Activated CD8-positive, alpha-beta T cell treated with anti-CD3 and anti-CD28 coated beads for 36 hours (primary cell): ENCODE measurements at regions of chr22 and their contacts with region 1.

Region 1: DNA sequence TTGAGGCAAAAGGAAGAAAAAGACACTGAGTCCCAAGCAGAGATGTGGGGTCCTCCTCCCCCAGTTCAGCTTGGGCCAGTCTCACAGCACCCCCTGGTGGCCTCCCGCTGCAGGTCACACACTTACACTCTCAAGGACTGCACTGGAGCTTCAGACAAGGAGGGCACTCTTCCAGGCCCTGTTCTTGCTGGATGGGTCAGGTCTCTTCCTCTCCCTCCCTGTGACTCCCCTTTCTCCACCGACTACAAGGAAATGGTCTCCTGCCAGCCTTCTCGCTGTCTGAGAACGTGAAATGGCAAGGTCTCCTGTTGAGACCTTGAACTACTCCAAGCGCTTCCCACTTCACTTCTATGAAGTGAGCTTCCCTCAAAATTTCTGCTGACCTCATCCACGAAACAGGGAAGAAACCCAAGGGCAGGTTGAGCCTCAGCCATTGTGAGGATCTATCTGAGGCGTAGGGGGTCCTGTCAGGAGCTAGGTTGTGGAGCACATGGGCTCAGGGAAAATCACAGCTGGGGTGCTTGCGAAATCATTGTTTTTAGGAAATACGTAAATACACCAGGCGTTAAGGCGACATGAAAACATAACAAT is 11.2 kb upstream of the IGLL1 start:
- DNase-seq: peak; percentile 82
- ATAC-seq: peak; percentile 84
- H3K4me3 Mint-ChIP-seq: no peak overlapping the region
- H3K27ac Mint-ChIP-seq: no peak overlapping the region
- H3K4me1 Mint-ChIP-seq: no peaks in the 10 kb centered on the region
- H3K27me3 Mint-ChIP-seq: no peaks in the 10 kb centered on the region
- CTCF ChIP-seq: peak; percentile 90

Region 2: DNA sequence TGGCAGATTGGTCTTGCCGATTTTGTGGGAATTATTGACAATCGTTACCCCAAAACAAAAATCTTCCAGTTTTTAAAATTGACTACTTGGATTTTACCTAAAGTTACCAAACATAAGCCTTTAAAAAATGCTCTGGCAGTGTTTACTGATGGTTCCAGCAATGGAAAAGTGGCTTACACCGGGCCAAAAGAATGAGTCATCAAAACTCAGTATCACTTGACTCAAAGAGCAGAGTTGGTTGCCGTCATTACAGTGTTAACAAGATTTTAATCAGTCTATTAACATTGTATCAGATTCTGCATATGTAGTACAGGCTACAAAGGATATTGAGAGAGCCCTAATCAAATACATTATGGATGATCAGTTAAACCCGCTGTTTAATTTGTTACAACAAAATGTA is 48.4 kb before region 1 on chr22:
- CTCF ChIA-PET with region 1: interaction called, 6 read pairs
- POLR2A ChIA-PET with region 1: no interaction called
- intact Hi-C with region 1: loop called (anchors 5 kb)
- DNase-seq: no peak
- ATAC-seq: no peak
- H3K4me3 Mint-ChIP-seq: no peak overlapping the region
- H3K27ac Mint-ChIP-seq: no peak overlapping the region
- H3K4me1 Mint-ChIP-seq: peaks cover 9% of the 10 kb centered on the region
- H3K27me3 Mint-ChIP-seq: peaks cover 2% of the 10 kb centered on the region
- CTCF ChIP-seq: no peak

Region 3: GRCh38 chr22:23580576-23581259 is 10.6 kb before region 1 on chr22:
- CTCF ChIA-PET with region 1: interaction called, 17 read pairs
- POLR2A ChIA-PET with region 1: no interaction called
- intact Hi-C with region 1: no loop called
- DNase-seq: no peak
- ATAC-seq: no peak
- H3K4me3 Mint-ChIP-seq: no peak overlapping the region
- H3K27ac Mint-ChIP-seq: no peak overlapping the region
- H3K4me1 Mint-ChIP-seq: peaks cover 4% of the 10 kb centered on the region
- H3K27me3 Mint-ChIP-seq: peaks cover 31% of the 10 kb centered on the region
- CTCF ChIP-seq: no peak